CD8-positive, alpha-beta T cell (primary cell): ENCODE measurements at regions of chr3 and their contacts with region 1.

Region 1: DNA sequence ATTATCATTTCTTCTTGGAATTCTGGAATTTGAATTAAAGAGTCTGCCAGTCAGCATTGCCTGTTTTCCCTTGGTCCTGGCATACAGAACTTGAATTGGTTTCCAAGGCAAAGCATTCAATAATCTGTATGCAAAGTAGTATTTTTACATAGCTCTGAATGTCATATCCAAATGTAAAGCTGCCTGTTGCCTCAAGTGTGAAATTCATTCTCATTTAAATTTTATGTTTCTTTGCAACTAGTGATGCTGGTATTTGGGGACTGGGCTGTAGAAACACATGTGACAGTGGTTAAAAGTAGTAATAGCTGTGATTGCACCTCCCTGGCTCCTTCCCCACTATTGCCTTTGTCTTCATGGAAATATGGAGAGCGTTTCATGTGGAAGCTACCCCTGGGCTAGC is 743.9 kb upstream of the GOLIM4 start:
- DNase-seq: no peak
- ATAC-seq: no peak
- H3K4me3 ChIP-seq: no peak overlapping the region
- H3K4me3 Mint-ChIP-seq: no peak overlapping the region
- H3K27ac ChIP-seq: no peak overlapping the region
- H3K27ac Mint-ChIP-seq: no peak overlapping the region
- H3K4me1 ChIP-seq: no peaks in the 10 kb centered on the region
- H3K4me1 Mint-ChIP-seq: no peaks in the 10 kb centered on the region
- H3K27me3 ChIP-seq: no peaks in the 10 kb centered on the region
- H3K27me3 Mint-ChIP-seq: no peaks in the 10 kb centered on the region
- CTCF ChIP-seq: no peak

Region 2: GRCh38 chr3:167032261-167032876 is 1807.3 kb before region 1 on chr3:
- CTCF ChIA-PET with region 1: no interaction called
- POLR2A ChIA-PET with region 1: no interaction called
- intact Hi-C with region 1: loop called in 1 of 2 experiments (anchors 5 kb)
- DNase-seq: no peak
- ATAC-seq: no peak
- H3K4me3 ChIP-seq: no peak overlapping the region
- H3K4me3 Mint-ChIP-seq: no peak overlapping the region
- H3K27ac ChIP-seq: no peak overlapping the region
- H3K27ac Mint-ChIP-seq: no peak overlapping the region
- H3K4me1 ChIP-seq: no peaks in the 10 kb centered on the region
- H3K4me1 Mint-ChIP-seq: no peaks in the 10 kb centered on the region
- H3K27me3 ChIP-seq: no peaks in the 10 kb centered on the region
- H3K27me3 Mint-ChIP-seq: no peaks in the 10 kb centered on the region
- CTCF ChIP-seq: no peak